ENCODE measurements at regions of chr10 and their contacts with region 1.

Region 1: DNA sequence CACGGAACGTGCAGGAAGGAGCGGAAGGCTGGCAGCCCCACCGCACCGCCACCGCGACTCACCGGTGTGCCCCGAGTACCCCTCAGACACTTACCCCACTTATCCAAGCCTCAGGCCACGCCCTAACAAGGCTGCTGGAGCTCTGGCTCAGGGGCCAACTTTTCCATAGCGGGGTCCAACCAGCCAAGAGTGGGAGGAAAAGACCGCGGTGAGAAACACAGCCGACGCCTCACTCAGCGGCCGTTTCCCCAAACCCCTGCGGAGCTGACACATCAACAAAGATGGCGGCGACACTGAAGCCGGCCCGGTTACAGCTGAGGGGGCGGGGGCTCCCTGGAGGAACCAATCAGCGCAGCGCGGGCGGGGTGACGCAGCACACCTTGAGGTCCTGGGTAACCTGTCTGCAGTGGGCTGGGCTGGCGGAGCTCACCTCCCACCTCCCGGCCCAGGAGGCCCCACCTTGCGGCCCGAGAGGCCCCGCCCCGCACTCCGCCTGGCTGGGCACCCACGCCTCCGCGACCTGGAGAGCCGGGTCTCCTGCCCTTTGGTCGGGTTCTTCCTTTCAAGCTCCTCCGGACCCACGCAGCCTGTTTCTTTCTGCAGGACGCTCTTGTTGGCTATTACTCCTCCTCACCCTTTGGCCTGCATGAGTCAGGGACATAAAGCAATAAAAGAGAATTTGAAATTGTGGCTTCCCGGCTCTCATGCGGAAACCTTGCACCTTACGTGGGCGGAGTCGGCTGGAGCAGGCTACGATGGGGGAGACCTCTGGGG is at the start of gene CCDC186:
- DNase-seq: peak; percentile 99
- ATAC-seq: peak; percentile 99
- H3K4me3 ChIP-seq: peak within 1 kb of the TSS; percentile 64 to 79
- H3K27ac ChIP-seq: peak within 1 kb of the TSS; percentile 86 to 98 (median 95)
- H3K4me1 ChIP-seq: peaks cover 15% of the 10 kb centered on the region
- H3K27me3 ChIP-seq: no peaks in the 10 kb centered on the region
- CTCF ChIP-seq: no peak
- POLR2A ChIP-seq: peak; percentile 71 to 92 (median 91)
- total RNA-seq, gene CCDC186: 42.3 to 53.4 TPM

Region 2: GRCh38 chr10:113993489-113993991 is 180.6 kb before region 1 on chr10:
- intact Hi-C with region 1: no loop called
- DNase-seq: peak in 2 of 4 donors; percentile 23 to 42
- ATAC-seq: no peak
- H3K4me3 ChIP-seq: no peak overlapping the region
- H3K27ac ChIP-seq: no peak overlapping the region
- H3K4me1 ChIP-seq: peaks cover 12% of the 10 kb centered on the region
- H3K27me3 ChIP-seq: no peaks in the 10 kb centered on the region
- CTCF ChIP-seq: no peak
- POLR2A ChIP-seq: no peak

Region 3: DNA sequence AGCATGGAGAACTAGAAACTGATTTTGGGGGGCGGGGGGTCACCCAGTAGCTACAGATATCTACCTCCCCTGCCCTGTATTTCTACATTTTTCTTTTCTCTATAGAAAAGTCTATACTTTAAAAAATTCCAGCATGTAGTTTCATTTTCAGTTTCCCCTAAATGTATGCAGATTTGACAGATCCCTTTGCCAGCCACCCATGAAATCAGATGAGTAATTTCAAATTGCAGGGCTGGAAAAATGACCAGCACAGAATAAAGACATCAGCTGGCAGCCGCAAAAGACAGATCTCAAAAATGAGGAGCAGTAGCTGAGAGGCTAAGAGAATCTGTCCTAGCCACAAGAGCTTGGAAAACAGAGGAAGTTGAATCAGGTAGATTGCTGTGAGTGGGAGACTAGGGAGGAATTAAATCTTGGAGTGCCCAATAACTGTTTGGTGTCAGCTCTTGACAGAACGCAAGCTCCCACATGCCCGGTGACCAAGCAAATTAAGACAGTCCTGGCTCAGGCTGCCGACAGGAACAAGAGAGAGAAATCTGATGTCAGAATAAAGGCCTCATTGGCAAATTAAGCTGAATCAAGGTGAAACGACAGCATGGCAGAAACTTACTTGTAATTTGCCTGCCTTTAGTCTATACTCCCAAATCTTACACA is 105.9 kb before region 1 on chr10:
- intact Hi-C with region 1: no loop called
- DNase-seq: no peak
- ATAC-seq: no peak
- H3K4me3 ChIP-seq: no peak overlapping the region
- H3K27ac ChIP-seq: no peak overlapping the region
- H3K4me1 ChIP-seq: peaks cover 28% of the 10 kb centered on the region
- H3K27me3 ChIP-seq: no peaks in the 10 kb centered on the region
- CTCF ChIP-seq: no peak
- POLR2A ChIP-seq: no peak

Region 4: DNA sequence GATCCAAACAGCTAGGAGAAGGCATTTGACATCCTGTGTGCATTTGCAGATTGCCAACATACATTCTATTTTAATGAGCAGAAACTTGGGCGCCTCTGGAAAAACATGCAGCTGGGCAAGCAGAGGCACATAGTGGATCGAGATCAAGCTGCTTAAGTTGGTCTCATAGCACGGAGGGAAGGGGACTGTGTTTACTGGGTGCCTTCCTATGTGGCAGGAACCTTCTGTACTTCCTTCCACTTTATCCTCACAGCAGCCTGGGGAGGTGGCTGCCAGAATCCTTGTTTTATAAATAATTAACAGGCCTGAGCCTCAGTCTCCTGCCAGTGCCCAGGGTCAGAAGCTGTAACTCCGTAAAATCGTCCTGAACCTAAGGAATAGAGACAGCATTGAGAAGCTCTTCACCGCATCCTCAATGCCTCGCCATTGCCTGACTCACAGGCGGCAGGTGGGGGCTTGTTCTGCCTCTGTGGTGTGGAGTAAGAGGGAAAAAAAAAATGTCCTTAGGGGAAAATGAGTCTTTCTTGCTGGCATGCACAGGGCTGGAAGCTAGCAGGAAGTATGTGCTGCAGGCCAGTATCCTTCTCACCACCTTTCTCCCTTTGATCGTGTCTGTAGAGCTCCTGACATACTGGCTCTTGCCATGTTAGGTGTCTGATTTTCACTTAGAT is 71.1 kb after region 1 on chr10:
- intact Hi-C with region 1: loop called (anchors 10 kb)
- DNase-seq: peak; percentile 35 to 73 (median 66)
- ATAC-seq: peak; percentile 56
- H3K4me3 ChIP-seq: no peak overlapping the region
- H3K27ac ChIP-seq: peak overlapping the region; percentile 55 to 83 (median 72)
- H3K4me1 ChIP-seq: peaks cover 24% of the 10 kb centered on the region
- H3K27me3 ChIP-seq: no peaks in the 10 kb centered on the region
- CTCF ChIP-seq: no peak
- POLR2A ChIP-seq: peak in 1 of 3 donors; percentile 20

Measured in body of pancreas (tissue), 4 donors.